Heart right ventricle (tissue), 16 donors: ENCODE measurements at regions of chr4 and their contacts with region 1.

Region 1: DNA sequence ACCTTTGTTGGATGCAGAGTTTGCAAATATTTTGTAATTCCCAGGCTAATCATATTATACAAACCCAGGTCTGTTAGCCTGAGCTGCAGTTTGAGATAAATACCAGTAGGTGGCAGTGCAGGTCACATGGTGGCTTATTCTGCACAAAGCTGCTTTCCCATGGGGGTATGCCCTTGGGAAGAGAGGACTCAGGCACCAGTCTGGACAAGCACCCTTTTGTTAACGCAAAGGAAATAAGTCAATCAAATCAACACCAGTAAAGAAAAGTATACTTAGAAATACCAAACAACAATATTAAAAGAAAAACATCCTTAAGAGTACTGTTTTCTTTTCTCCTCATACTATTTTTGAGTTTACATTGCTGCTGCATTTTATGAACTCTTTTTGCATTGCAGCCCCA is 389.0 kb upstream of the ZFP42 start:
- DNase-seq: peak in 1 of 2 donors; percentile 11
- ATAC-seq: peak in 1 of 8 donors; percentile 69
- H3K4me3 ChIP-seq: no peak overlapping the region
- H3K27ac ChIP-seq: no peak overlapping the region
- H3K4me1 ChIP-seq: peaks cover 0 to 9% (median 0%) of the 10 kb centered on the region in 9 donors
- H3K27me3 ChIP-seq: peaks cover 0 to 6% (median 0%) of the 10 kb centered on the region in 7 donors
- CTCF ChIP-seq: peak; percentile 67 to 85 (median 82)

Region 2: GRCh38 chr4:187258651-187259401 is 347.8 kb before region 1 on chr4:
- intact Hi-C with region 1: no loop called
- DNase-seq: no peak
- ATAC-seq: no peak
- H3K4me3 ChIP-seq: no peak overlapping the region
- H3K27ac ChIP-seq: no peak overlapping the region
- H3K4me1 ChIP-seq: no peaks in the 10 kb centered on the region
- H3K27me3 ChIP-seq: no peaks in the 10 kb centered on the region
- CTCF ChIP-seq: no peak

Region 3: GRCh38 chr4:188627892-188628291 is 1021.3 kb after region 1 on chr4:
- intact Hi-C with region 1: loop called in 1 of 10 experiments (anchors 10 kb)
- DNase-seq: no peak
- ATAC-seq: no peak
- H3K4me3 ChIP-seq: no peak overlapping the region
- H3K27ac ChIP-seq: no peak overlapping the region
- H3K4me1 ChIP-seq: no peaks in the 10 kb centered on the region
- H3K27me3 ChIP-seq: peaks cover 0 to 3% (median 0%) of the 10 kb centered on the region in 7 donors
- CTCF ChIP-seq: no peak

Region 4: GRCh38 chr4:189124149-189124758 is 1517.7 kb after region 1 on chr4:
- intact Hi-C with region 1: loop called in 3 of 10 experiments (anchors 10 kb)
- DNase-seq: no peak
- ATAC-seq: no peak
- H3K4me3 ChIP-seq: no peak overlapping the region
- H3K27ac ChIP-seq: no peak overlapping the region
- H3K4me1 ChIP-seq: no peaks in the 10 kb centered on the region
- H3K27me3 ChIP-seq: no peaks in the 10 kb centered on the region
- CTCF ChIP-seq: peak; percentile 11 to 71 (median 58)

Region 5: GRCh38 chr4:189202182-189202868 is 1595.7 kb after region 1 on chr4:
- intact Hi-C with region 1: loop called in 1 of 10 experiments (anchors 10 kb)
- DNase-seq: peak; percentile 44 to 69
- ATAC-seq: peak in 6 of 8 donors; percentile 34 to 75 (median 57)
- H3K4me3 ChIP-seq: peak overlapping the region in 5 of 10 donors; percentile 10 to 25 (median 24)
- H3K27ac ChIP-seq: no peak overlapping the region
- H3K4me1 ChIP-seq: peaks cover 0 to 11% (median 0%) of the 10 kb centered on the region in 9 donors
- H3K27me3 ChIP-seq: peaks cover 0 to 17% (median 7%) of the 10 kb centered on the region in 7 donors
- CTCF ChIP-seq: peak; percentile 51 to 84 (median 74)